Activated T-helper 2 cell treated with anti-CD3 and anti-CD28 coated beads, Interferon-gamma antibody, Interleukin-2, Interleukin-4, amounts not matched to agents 10 μg/mL and 5 μg/mL and 100 μg/mL, durations not matched to agents 14 hours and 24 hours and 36 hours (primary cell): ENCODE measurements at regions of chr15 and their contacts with region 1.

Region 1: GRCh38 chr15:69160141-69160993 is at the start of gene GLCE:
- DNase-seq: peak; percentile 90
- H3K4me3 Mint-ChIP-seq: peak within 1 kb of the TSS; percentile 91
- H3K27ac Mint-ChIP-seq: peak within 1 kb of the TSS; percentile 58
- H3K4me1 Mint-ChIP-seq: peaks cover 14% of the 10 kb centered on the region
- H3K27me3 Mint-ChIP-seq: peaks cover 51% of the 10 kb centered on the region
- total RNA-seq, gene GLCE: 2.4 and 2.5 TPM in 2 replicates

Region 2: DNA sequence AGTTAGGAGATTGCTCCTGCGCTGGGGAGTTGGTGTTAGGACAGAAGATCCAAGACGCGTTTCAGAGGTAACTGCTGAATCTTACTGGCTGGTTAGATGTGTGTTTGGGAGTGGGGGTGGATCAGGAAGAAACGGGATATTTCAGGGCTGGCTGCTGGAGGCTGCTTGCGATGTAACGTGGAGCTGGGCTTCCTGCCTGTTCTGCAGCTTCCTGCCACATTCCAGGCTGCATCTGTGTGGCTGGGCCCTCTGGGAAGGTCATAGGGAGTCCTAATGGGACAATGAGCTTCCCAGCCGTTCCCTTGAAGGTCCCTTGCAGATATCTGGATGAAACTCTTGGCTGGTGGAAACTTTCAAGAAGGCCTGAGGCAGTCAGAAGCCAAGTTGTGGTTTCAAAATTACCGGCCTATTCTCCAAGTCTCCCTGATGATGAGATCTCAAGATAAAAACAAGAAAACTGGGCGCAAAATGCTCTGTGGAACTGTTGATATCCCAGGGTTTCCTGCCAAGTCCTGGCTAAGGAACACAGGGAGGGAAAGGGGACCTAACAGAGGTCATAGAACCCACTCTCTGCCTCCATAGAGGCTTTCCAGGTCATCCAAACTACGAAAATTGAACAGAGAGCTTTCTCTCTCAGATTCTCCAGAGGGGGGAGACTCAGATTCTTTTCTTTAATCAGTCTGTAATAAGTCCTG is 78.9 kb before region 1 on chr15:
- intact Hi-C with region 1: no loop called
- DNase-seq: no peak
- H3K4me3 Mint-ChIP-seq: no peak overlapping the region
- H3K27ac Mint-ChIP-seq: no peak overlapping the region
- H3K4me1 Mint-ChIP-seq: peaks cover 13% of the 10 kb centered on the region
- H3K27me3 Mint-ChIP-seq: peaks cover 30% of the 10 kb centered on the region

Region 3: DNA sequence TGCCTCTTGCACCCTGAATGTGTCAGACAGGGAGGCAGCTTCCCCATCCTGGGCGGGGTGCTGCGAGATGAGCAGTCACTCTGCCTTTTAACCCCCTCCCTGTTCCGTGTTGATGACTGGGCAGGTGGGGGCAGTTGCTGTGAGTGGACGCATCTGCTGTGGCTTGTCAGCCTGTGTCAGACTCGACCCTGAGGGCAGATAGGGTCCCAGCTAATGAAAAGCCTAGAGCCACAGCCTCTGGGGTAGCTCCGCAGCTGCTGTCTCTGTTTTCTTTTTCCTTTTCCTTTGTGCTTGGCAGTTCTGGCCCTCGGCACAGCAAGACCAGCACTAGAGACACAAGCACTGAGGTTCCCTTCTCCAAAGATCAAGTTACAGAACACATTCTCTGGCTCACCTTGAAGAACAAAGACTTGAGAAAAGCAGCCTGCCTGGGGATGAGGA is 42.9 kb before region 1 on chr15:
- intact Hi-C with region 1: no loop called
- DNase-seq: no peak
- H3K4me3 Mint-ChIP-seq: no peak overlapping the region
- H3K27ac Mint-ChIP-seq: no peak overlapping the region
- H3K4me1 Mint-ChIP-seq: no peaks in the 10 kb centered on the region
- H3K27me3 Mint-ChIP-seq: peaks cover 17% of the 10 kb centered on the region

Region 4: DNA sequence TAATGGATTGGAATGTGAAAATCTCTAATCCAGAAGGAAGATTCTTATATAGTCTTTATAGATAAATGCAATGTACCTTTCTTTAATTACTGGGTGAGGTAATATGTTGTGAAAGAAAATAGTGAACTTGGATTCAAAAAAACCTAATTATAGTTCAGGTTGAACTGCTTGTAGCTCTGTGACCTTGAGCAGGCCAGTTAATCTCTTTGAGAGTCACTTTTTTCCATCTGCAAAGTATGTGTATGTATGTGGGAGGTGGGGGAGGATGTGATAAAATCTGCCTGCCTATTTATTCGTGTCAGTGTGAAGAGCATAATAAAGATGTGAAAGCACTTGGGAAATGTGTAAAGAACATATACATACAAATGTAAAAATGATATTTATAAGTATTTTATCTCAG is 34.5 kb after region 1 on chr15:
- intact Hi-C with region 1: loop called (anchors 5 kb)
- DNase-seq: no peak
- H3K4me3 Mint-ChIP-seq: no peak overlapping the region
- H3K27ac Mint-ChIP-seq: no peak overlapping the region
- H3K4me1 Mint-ChIP-seq: peaks cover 8% of the 10 kb centered on the region
- H3K27me3 Mint-ChIP-seq: no peaks in the 10 kb centered on the region

Region 5: DNA sequence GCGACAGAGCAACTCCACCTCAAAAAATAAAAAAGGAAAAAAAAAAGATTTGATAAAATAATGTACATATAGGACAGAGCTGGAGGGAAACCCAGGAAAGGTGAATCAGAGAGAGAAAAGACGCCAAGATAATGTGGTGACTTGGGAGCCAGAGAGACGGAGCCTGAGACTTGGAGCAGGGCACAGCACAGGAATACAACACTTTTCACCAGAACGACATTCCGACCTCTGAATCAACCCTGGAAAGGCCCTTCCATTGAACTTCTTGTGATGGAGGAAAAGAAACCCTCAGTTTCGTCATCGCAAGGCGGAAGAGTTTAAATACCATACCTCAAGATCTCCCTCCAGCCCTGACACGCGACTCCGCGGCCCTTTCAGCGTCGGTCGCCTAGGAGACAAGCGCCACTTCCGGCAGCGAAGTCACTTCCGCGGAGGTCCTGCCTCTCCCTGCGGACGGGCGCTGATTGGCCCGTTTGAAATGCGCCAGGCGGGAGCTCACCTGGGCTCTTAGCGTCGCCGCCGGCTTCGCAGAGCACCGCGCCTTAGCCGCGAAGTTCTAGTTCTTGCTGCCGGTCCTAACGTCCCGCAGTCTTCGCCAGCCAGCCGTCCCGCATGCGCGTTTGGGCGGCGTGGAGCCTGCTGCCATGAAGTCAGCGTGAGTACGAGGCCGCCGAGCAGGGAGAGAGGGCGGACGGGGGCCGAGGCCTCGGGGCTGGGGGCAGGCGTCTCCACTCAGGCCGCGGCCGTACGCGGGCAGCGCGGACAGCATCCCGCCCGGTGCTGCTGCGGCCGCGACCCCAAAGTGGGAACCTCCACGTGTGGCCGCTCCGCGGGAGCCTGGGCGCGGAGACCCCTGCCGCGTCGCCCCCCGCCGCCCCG is 253.7 kb after region 1 on chr15 and contains the start of gene KIF23:
- intact Hi-C with region 1: loop called (anchors 1 kb)
- DNase-seq: peak; percentile 92
- H3K4me3 Mint-ChIP-seq: peak within 1 kb of the TSS; percentile 89
- H3K27ac Mint-ChIP-seq: peak within 1 kb of the TSS; percentile 75
- H3K4me1 Mint-ChIP-seq: peaks cover 34% of the 10 kb centered on the region
- H3K27me3 Mint-ChIP-seq: peaks cover 3% of the 10 kb centered on the region
- total RNA-seq, gene KIF23: 44.5 and 46.8 TPM in 2 replicates

Region 6: DNA sequence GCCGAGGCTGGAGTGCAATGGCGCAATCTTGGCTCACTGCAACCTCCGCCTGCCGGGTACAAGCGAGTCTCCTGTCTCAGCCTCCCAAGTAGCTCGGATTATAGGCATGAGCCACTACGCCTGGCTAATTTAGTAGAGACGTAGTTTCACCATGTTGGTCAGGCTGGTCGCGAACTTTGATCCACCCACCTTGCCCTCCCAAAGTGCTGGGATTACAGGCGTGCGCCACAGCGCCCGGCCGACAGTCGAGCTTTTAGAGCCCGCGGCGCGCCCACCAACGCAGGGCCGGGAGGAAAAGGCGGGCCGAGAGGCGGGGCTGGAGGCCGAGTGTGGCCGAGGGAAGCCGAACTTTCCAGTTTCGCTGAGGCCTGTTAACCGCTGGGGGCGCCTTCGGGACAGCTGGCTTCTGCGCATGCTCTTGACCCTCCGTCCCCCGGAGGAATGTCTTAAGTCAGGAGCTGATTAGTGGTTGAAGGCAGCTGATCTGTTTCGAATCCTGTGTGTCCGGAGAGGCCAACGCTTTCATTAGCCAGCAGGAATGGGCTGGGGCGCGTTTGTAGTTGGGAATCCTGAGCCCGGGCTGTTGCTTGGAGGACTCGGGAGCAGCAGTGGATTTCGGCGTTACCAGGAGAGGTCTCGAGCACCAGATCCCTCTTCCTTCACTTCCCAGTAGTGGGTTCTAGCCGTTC is 302.3 kb after region 1 on chr15:
- intact Hi-C with region 1: loop called (anchors 10 kb)
- DNase-seq: peak; percentile 88
- H3K4me3 Mint-ChIP-seq: peak overlapping the region; percentile 84
- H3K27ac Mint-ChIP-seq: peak overlapping the region; percentile 71
- H3K4me1 Mint-ChIP-seq: peaks cover 15% of the 10 kb centered on the region
- H3K27me3 Mint-ChIP-seq: peaks cover 16% of the 10 kb centered on the region